Posterior vena cava (tissue), 2 donors: ENCODE measurements at regions of chr17 and their contacts with region 1.

Region 1: DNA sequence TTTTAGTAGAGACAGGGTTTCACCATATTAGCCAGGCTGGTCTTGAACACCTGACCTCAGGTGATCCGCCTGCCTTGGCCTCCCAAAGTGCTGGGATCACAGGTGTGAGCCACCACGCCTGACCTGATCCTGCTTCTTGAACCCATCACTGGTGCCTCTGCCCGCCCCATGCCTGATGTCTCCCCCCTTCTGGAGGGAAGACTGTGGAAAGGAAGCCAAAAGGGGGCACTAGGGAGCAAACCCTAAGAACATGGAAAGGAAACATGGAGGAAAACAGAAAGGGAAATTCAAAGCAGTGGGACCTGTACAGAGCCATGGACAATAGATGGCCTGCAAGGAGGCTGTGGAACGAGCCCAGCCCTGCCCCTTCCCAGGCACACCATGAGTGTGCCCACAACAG is 31.1 kb upstream of the FASN start:
- DNase-seq: no peak

Region 2: DNA sequence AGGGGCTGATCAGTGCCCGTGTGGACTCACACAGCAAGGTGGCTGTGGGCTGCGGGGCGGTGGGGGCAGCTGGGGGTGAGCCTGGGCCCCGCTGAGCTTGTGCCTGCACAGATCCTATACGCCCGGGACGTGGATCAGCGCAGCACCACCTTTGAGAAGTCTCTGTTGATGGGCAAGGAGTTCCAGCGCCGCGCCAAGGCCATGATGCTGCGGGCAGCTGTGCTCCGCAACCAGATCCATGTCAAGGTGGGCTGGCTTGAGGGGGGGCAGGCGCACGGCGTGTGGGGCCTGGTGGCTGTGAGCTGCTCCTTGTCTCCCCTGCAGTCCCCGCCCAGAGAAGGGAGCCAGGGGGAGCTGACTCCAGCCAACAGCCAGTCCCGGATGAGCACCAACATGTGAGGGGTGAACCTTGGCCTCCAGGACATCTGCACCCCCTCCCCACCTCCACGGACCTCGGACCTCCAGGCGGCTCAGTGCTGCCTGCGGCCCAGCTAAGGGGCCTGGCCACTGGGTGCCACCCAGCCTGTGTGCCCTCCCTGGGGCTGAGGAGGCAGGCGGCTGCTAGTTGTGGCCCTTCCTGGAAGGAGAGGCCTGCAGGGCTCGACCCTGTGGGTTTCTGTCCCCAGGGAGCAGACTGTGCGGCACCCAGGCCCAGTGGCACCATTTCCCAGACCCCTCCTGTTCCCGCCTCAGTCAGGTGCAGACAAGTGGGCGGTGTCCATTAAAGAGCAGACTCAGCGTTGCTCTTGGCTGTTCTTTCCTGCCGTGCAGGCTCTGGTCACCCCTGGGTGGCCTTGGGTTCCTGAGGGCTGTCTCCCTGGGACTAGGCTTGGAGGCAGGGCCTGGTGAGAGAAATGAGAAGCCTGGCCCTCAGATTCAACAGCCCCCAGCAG is 72.1 kb before region 1 on chr17:
- intact Hi-C with region 1: no loop called
- DNase-seq: no peak

Region 3: GRCh38 chr17:82076018-82076784 is 52.9 kb before region 1 on chr17:
- intact Hi-C with region 1: no loop called
- DNase-seq: no peak

Region 4: GRCh38 chr17:82086941-82087906 is 41.9 kb before region 1 on chr17:
- intact Hi-C with region 1: loop called in 1 of 2 experiments (anchors 2 kb)
- DNase-seq: no peak

Region 5: DNA sequence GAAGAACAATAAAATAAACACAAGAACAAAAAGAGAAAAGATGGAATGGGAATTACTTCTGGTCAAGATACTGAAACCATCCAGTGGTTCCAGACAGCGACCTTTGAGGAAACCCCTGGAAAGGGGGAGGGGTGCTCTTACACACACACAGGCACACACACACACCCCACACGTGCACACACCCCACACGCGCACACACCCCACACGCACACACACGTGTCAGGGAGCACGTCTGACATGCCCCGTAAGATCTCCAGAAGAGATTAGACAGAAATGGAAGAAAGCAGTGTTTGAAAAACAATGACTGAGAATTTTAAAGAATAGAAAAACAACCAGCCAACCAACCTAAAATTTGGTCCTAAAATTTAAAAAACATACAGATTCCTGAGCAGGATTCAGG is 14.2 kb after region 1 on chr17:
- intact Hi-C with region 1: loop called in 1 of 2 experiments (anchors 1 kb)
- DNase-seq: no peak